Activated B cell treated with CpG ODN at 0.5 μM for 24 hours (primary cell): ENCODE measurements at regions of chr14 and their contacts with region 1.

Region 1: DNA sequence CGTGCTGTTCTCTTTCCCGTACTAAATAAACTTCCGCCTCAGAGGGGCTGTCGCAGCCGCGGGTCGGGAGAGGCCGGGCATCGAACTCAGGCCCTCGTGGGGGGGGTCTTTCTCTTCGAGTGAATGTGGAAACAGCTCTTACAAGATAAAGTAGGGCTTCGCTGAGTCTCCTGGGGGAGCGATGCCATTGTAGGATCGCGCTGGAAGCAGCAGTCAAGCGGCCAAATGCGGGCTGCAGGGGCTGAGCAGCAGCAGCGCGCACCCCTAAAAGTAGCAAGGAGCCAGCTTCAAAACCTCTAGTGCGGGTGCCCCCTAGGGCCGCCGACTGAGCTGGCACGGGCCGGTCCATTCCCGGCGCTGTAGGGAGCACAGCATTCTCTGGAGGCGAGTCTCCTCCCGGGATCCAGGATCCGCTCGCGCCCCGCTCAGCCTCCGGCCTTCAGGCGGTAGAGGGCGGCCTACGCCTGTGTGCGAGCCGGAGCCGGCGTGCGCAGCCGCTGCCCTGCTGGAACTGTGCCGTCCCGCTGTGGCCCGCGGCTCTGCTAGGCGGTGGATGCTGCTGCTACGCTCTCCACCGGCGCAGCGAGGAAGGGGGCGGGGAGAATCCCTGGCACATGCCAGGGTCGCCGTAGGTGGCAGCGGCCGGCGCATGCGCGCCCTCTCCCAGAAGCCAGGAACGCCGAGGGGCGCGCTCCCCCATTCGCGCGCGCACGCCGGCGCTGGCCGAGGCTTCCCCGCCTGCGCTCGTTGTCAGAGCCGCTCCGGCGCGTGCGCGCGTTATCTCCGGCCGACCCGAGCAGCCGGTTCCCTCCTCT is at the start of gene FUT8:
- DNase-seq: peak; percentile 93
- ATAC-seq: peak; percentile 88
- H3K4me3 Mint-ChIP-seq: peak within 1 kb of the TSS; percentile 99
- H3K27ac Mint-ChIP-seq: peak within 1 kb of the TSS; percentile 99
- H3K4me1 Mint-ChIP-seq: peaks cover 42% of the 10 kb centered on the region
- H3K27me3 Mint-ChIP-seq: no peaks in the 10 kb centered on the region
- CTCF ChIP-seq: no peak
- total RNA-seq, gene FUT8: 115 and 123 TPM in 2 replicates

Region 2: GRCh38 chr14:64986578-64987571 is 425.4 kb before region 1 on chr14 and contains the start of gene FNTB:
- CTCF ChIA-PET with region 1: interaction called, 7 read pairs
- POLR2A ChIA-PET with region 1: interaction called, 5 read pairs
- intact Hi-C with region 1: loop called (anchors 1 kb)
- DNase-seq: peak; percentile 88
- ATAC-seq: peak; percentile 93
- H3K4me3 Mint-ChIP-seq: peak within 1 kb of the TSS; percentile 99
- H3K27ac Mint-ChIP-seq: peak within 1 kb of the TSS; percentile 99
- H3K4me1 Mint-ChIP-seq: peaks cover 34% of the 10 kb centered on the region
- H3K27me3 Mint-ChIP-seq: peaks cover 14% of the 10 kb centered on the region
- CTCF ChIP-seq: no peak
- total RNA-seq, gene FNTB: 7.9 and 10.5 TPM in 2 replicates

Region 3: GRCh38 chr14:65179918-65180724 is 232.1 kb before region 1 on chr14:
- CTCF ChIA-PET with region 1: no interaction called
- POLR2A ChIA-PET with region 1: interaction called, 18 read pairs
- intact Hi-C with region 1: no loop called
- DNase-seq: peak; percentile 46
- ATAC-seq: peak; percentile 93
- H3K4me3 Mint-ChIP-seq: peak overlapping the region; percentile 71
- H3K27ac Mint-ChIP-seq: peak overlapping the region; percentile 86
- H3K4me1 Mint-ChIP-seq: peaks cover 37% of the 10 kb centered on the region
- H3K27me3 Mint-ChIP-seq: no peaks in the 10 kb centered on the region
- CTCF ChIP-seq: no peak

Region 4: DNA sequence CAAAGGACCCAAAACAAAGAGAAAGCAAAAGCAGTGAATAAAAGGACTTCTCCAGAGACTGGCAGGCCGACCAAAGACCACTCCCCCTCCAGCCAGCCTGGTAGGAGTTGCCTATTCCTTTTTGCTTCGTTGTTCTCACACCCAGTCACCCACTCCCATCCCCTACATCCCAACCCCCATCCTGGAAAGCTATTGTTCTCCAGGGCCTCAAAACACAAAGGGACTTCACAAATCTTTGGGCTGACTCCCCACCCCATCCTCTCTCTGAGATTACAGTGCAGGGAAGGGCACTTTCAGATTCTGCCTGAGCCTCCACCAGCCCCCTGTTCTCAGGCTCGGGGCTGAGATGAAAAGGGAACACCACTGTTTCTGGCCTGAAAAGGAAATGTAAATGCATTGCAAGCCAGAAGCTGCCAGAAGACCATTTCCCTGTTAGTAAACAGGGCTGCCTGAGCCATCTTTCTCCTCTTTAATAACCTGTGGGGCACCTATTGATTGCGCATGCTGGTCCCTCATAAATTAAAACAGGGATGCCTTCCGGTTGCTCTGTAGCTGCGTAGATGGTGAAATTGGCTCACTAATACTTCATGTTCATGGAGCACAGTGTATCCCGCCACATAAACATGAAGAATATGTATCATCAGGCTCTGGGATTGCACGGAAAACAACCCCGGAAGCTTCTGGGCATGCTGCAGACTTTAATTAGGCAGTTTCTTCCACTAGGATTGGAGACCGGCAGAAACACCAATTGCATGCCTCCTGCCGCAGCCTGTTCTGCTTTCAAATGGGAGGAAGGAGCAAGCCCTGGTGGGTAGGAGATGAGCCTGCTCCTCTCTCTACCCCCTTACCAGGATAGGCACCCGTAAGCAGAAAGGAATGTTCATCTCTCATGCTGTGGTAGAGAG is 130.0 kb before region 1 on chr14:
- CTCF ChIA-PET with region 1: interaction called, 114 read pairs
- POLR2A ChIA-PET with region 1: interaction called, 183 read pairs
- intact Hi-C with region 1: loop called (anchors 1 kb)
- DNase-seq: no peak
- ATAC-seq: peak; percentile 13
- H3K4me3 Mint-ChIP-seq: peak overlapping the region; percentile 79
- H3K27ac Mint-ChIP-seq: peak overlapping the region; percentile 93
- H3K4me1 Mint-ChIP-seq: peaks cover 57% of the 10 kb centered on the region
- H3K27me3 Mint-ChIP-seq: no peaks in the 10 kb centered on the region
- CTCF ChIP-seq: no peak

Region 5: GRCh38 chr14:65346947-65347346 is 65.3 kb before region 1 on chr14:
- CTCF ChIA-PET with region 1: interaction called, 6 read pairs
- POLR2A ChIA-PET with region 1: interaction called, 31 read pairs
- intact Hi-C with region 1: no loop called
- DNase-seq: no peak
- ATAC-seq: no peak
- H3K4me3 Mint-ChIP-seq: no peak overlapping the region
- H3K27ac Mint-ChIP-seq: no peak overlapping the region
- H3K4me1 Mint-ChIP-seq: peaks cover 34% of the 10 kb centered on the region
- H3K27me3 Mint-ChIP-seq: no peaks in the 10 kb centered on the region
- CTCF ChIP-seq: no peak

Region 6: DNA sequence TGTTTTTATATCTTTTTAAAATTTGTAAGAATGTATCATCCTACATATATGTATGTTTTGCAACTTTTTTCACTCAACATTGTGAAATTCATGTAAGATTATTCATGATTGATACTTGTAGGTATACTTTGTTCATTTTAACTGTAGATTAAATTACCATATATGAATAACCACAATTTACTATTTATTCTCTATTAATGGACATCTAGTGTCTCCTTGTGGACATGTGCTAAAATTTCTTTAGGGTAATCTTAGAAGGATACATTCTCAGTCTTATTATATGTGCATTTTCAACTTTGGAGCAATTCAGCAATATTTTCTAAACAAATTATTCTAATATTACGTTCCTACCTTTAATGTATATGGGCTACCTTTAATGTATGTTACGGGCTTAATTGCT is 192.7 kb after region 1 on chr14:
- CTCF ChIA-PET with region 1: interaction called, 9 read pairs
- POLR2A ChIA-PET with region 1: no interaction called
- intact Hi-C with region 1: loop called (anchors 1 kb)
- DNase-seq: no peak
- ATAC-seq: peak; percentile 21
- H3K4me3 Mint-ChIP-seq: no peak overlapping the region
- H3K27ac Mint-ChIP-seq: no peak overlapping the region
- H3K4me1 Mint-ChIP-seq: peaks cover 7% of the 10 kb centered on the region
- H3K27me3 Mint-ChIP-seq: no peaks in the 10 kb centered on the region
- CTCF ChIP-seq: no peak

Region 7: GRCh38 chr14:65658202-65658601 is 246.0 kb after region 1 on chr14:
- CTCF ChIA-PET with region 1: no interaction called
- POLR2A ChIA-PET with region 1: no interaction called
- intact Hi-C with region 1: no loop called
- DNase-seq: no peak
- ATAC-seq: no peak
- H3K4me3 Mint-ChIP-seq: no peak overlapping the region
- H3K27ac Mint-ChIP-seq: no peak overlapping the region
- H3K4me1 Mint-ChIP-seq: peaks cover 7% of the 10 kb centered on the region
- H3K27me3 Mint-ChIP-seq: no peaks in the 10 kb centered on the region
- CTCF ChIP-seq: no peak

Region 8: GRCh38 chr14:65958664-65959562 is 546.7 kb after region 1 on chr14:
- CTCF ChIA-PET with region 1: interaction called, 67 read pairs
- POLR2A ChIA-PET with region 1: interaction called, 4 read pairs
- intact Hi-C with region 1: no loop called
- DNase-seq: no peak
- ATAC-seq: peak; percentile 57
- H3K4me3 Mint-ChIP-seq: no peak overlapping the region
- H3K27ac Mint-ChIP-seq: no peak overlapping the region
- H3K4me1 Mint-ChIP-seq: no peaks in the 10 kb centered on the region
- H3K27me3 Mint-ChIP-seq: peaks cover 20% of the 10 kb centered on the region
- CTCF ChIP-seq: no peak